Activated naive CD4-positive, alpha-beta T cell treated with anti-CD3 and anti-CD28 coated beads for 36 hours (primary cell): ENCODE measurements at regions of chr19 and their contacts with region 1.

Region 1: GRCh38 chr19:21474671-21475181 is 30.7 kb upstream of the ZNF429 start:
- DNase-seq: peak; percentile 93
- H3K4me3 Mint-ChIP-seq: peak overlapping the region; percentile 83
- H3K27ac Mint-ChIP-seq: no peak overlapping the region
- H3K4me1 Mint-ChIP-seq: peaks cover 4% of the 10 kb centered on the region
- H3K27me3 Mint-ChIP-seq: no peaks in the 10 kb centered on the region

Region 2: GRCh38 chr19:21328885-21329605 is 145.7 kb before region 1 on chr19 and contains the start of gene ZNF708:
- CTCF ChIA-PET with region 1: no interaction called
- intact Hi-C with region 1: loop called (anchors 2 kb)
- DNase-seq: peak; percentile 90
- H3K4me3 Mint-ChIP-seq: peak within 1 kb of the TSS; percentile 98
- H3K27ac Mint-ChIP-seq: peak within 1 kb of the TSS; percentile 98
- H3K4me1 Mint-ChIP-seq: peaks cover 33% of the 10 kb centered on the region
- H3K27me3 Mint-ChIP-seq: no peaks in the 10 kb centered on the region
- total RNA-seq, gene ZNF708: 7.8 to 10.9 TPM

Region 3: DNA sequence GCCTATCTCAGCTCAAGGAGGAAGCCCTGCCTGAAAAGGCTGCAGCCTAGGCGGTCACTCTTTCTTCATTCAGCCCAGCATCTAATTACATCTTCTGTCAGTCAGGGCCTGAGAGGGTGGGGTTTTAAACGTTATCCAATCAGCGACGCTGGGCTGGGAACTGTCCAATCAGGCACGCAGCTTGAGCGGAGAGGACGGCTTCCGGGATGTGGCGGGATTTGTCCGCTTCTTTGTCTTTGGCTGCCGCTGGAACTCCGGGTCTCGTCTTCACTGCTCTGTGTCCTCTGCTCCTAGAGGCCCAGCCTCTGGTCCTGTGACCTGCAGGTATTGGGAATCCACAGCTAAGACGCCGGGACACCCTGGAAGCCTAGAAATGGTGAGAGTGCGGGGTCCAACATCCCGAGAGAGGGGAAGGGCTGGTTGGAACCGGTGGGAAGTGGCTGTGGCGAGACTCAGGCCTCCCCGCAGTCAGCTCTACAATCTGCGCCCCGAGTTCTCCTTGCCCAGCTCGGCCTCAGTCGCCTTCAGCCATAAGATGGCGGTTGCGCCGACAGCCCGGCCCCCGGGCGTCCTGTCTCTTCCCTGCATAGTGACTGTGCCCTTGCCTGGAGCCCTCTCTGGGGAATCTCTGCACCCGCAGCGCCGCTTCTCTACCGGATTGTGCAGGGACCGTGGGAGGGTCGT is 115.8 kb before region 1 on chr19 and contains the start of gene ZNF738:
- CTCF ChIA-PET with region 1: no interaction called
- intact Hi-C with region 1: loop called (anchors 2 kb)
- DNase-seq: peak; percentile 93
- H3K4me3 Mint-ChIP-seq: peak within 1 kb of the TSS; percentile 99
- H3K27ac Mint-ChIP-seq: peak within 1 kb of the TSS; percentile 93
- H3K4me1 Mint-ChIP-seq: peaks cover 8% of the 10 kb centered on the region
- H3K27me3 Mint-ChIP-seq: no peaks in the 10 kb centered on the region
- total RNA-seq, gene ZNF738: 16.6 to 17.1 TPM

Region 4: GRCh38 chr19:21463449-21464105 is 11.1 kb before region 1 on chr19:
- CTCF ChIA-PET with region 1: interaction called, 3 read pairs
- intact Hi-C with region 1: loop called (anchors 1 kb)
- DNase-seq: peak; percentile 81
- H3K4me3 Mint-ChIP-seq: peak overlapping the region; percentile 87
- H3K27ac Mint-ChIP-seq: no peak overlapping the region
- H3K4me1 Mint-ChIP-seq: peaks cover 5% of the 10 kb centered on the region
- H3K27me3 Mint-ChIP-seq: peaks cover 5% of the 10 kb centered on the region

Region 5: DNA sequence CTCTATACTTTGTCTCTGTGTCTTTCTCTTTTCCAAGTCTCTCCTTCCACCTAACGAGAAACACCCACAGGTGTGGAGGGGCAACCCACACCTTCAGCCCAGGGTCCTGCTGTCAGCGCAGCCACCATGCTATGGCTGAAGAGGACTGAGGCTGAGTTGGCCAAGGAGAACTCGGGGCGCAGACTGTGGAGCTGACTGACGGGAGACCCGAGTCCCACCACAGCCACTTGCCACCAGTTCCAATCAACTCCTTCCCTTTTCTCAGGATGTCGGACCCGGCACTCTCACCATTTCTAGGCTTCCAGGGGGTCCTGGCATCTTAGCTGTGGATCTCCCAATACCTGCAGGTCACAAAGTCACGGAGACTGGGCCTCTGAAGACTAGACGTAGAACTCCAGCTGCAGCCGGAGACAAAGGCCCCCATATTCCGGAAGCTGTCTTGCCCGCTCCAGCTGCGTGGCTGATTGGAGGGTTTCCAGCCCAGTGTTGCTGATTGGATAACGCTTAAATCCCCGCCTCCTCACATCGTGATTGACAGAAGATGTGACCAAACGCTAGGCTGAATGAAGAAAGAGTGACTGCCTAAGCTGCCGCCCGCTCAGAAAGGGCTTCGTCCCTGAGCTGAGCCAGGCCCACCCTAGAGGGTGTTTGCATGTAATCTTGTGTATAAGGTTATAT is 94.2 kb after region 1 on chr19:
- CTCF ChIA-PET with region 1: no interaction called
- intact Hi-C with region 1: loop called (anchors 1 kb)
- DNase-seq: peak; percentile 94
- H3K4me3 Mint-ChIP-seq: peak overlapping the region; percentile 99
- H3K27ac Mint-ChIP-seq: peak overlapping the region; percentile 99
- H3K4me1 Mint-ChIP-seq: peaks cover 30% of the 10 kb centered on the region
- H3K27me3 Mint-ChIP-seq: no peaks in the 10 kb centered on the region